Mammary epithelial cell (primary cell): ENCODE measurements at regions of chr6 and their contacts with region 1.

Region 1: DNA sequence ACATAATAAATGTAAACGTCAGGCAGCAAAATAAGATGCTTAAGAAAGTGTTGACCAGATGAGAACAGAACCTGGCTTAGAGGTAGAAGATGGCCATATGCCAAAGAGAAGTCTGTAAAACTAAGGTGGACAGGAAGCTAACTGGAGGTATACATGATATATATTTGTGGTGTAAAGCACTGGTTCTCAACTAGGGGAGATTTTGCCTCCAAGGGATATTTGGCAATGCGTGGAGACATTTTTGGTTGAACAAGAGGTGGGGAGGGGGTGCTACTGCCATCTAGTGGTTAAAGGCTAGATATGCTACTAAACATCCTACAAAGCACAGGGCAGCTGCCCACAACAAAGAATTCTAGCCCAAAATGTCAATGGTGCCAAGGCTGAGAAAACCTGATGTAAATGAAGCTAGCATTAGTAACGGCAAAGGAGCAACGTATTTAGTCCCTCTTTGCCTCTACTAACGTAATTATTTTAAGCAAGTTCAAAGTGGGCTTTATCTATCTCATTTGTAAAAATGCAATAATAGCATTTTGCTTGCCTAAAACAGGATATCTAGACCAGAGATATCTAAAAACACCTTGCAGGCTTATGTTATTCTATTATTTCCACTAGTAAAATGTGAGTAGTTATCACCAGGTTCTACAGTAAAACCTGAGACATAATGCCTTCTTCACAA is 182.6 kb downstream of the RNGTT start:
- DNase-seq: peak; percentile 56
- H3K4me3 ChIP-seq: no peak overlapping the region
- H3K27ac ChIP-seq: no peak overlapping the region
- H3K4me1 ChIP-seq: no peaks in the 10 kb centered on the region
- H3K27me3 ChIP-seq: no peaks in the 10 kb centered on the region
- CTCF ChIP-seq: peak; percentile 63 to 89

Region 2: GRCh38 chr6:88238065-88238464 is 542.8 kb before region 1 on chr6:
- CTCF ChIA-PET with region 1: no interaction called
- dilution Hi-C with region 1: no loop called
- in situ Hi-C with region 1: no loop called
- intact Hi-C with region 1: loop called (anchors 2 kb)
- DNase-seq: peak; percentile 8
- H3K4me3 ChIP-seq: no peak overlapping the region
- H3K27ac ChIP-seq: no peak overlapping the region
- H3K4me1 ChIP-seq: no peaks in the 10 kb centered on the region
- H3K27me3 ChIP-seq: no peaks in the 10 kb centered on the region
- CTCF ChIP-seq: peak; percentile 36 to 58

Region 3: DNA sequence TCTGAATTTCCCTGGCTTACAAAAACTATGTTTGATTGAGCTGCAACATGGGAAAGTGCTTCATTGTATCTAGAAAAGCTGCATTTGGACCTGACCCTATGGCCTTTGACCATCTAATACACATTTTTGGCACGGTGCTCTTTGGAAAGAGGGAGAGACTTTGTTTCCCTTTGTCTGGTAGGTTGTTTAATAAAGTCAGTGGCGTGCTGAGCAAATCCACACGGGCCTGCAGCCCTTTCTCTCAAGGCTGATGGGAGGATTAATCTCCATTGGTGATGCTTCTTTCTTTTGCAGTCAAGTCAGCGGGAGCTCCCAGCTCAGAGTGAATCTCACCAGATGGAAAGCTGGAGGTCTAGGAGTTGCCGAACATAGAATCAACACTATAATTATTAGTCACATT is 300.0 kb before region 1 on chr6:
- CTCF ChIA-PET with region 1: no interaction called
- dilution Hi-C with region 1: no loop called
- in situ Hi-C with region 1: no loop called
- intact Hi-C with region 1: no loop called
- DNase-seq: no peak
- H3K4me3 ChIP-seq: no peak overlapping the region
- H3K27ac ChIP-seq: no peak overlapping the region
- H3K4me1 ChIP-seq: no peaks in the 10 kb centered on the region
- H3K27me3 ChIP-seq: no peaks in the 10 kb centered on the region
- CTCF ChIP-seq: no peak

Region 4: GRCh38 chr6:88492824-88493223 is 288.0 kb before region 1 on chr6:
- CTCF ChIA-PET with region 1: no interaction called
- dilution Hi-C with region 1: no loop called
- in situ Hi-C with region 1: no loop called
- intact Hi-C with region 1: loop called (anchors 10 kb)
- DNase-seq: no peak
- H3K4me3 ChIP-seq: no peak overlapping the region
- H3K27ac ChIP-seq: no peak overlapping the region
- H3K4me1 ChIP-seq: no peaks in the 10 kb centered on the region
- H3K27me3 ChIP-seq: no peaks in the 10 kb centered on the region
- CTCF ChIP-seq: peak; percentile 18 to 61